ENCODE measurements at regions of chr1 and their contacts with region 1.

Region 1: DNA sequence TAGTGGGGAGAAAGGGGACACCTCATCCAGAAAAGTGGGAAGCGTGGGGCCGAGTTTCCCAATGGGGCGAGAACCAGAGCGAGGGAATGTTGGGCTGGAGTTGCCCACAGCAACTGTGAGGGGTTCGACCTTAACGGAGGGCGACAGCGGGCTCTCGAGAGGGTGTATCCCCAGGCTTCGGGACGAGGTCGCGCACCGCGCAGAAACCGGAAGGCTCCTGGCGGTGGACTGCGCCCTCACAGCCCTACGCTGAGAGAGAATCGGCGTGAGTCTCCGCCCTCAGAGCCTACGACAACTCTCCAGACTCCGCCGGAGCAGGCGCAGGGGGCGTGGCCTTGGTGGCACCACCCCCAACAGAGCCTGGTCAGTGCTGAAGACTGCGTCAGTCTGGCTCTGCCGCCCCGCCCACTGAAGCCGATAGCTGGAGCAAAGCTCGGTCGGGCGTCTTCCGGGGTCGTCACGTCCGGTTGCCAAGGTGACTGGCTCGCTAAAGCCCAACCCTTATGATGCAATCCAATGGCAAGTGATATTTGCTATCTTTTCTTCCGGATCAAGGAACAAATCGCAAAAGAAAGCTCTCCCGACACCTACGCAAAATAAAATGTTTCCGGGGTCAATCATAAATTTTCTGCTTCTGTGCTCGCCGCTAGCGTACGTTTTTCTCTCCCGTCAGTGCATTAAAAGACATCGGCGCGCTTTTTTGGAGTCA is at the start of gene LRIF1:
- DNase-seq: peak; percentile 100
- H3K4me3 ChIP-seq: peak within 1 kb of the TSS; percentile 49 to 85 (median 64)
- H3K27ac ChIP-seq: peak within 1 kb of the TSS; percentile 93
- H3K4me1 ChIP-seq: peaks cover 15% of the 10 kb centered on the region
- H3K27me3 ChIP-seq: peaks cover 2 to 4% of the 10 kb centered on the region in 2 experiments
- CTCF ChIP-seq: peak; percentile 45 to 66
- POLR2A ChIP-seq: peak; percentile 85
- total RNA-seq, gene LRIF1: 12.9 and 13.0 TPM in 2 replicates

Region 2: DNA sequence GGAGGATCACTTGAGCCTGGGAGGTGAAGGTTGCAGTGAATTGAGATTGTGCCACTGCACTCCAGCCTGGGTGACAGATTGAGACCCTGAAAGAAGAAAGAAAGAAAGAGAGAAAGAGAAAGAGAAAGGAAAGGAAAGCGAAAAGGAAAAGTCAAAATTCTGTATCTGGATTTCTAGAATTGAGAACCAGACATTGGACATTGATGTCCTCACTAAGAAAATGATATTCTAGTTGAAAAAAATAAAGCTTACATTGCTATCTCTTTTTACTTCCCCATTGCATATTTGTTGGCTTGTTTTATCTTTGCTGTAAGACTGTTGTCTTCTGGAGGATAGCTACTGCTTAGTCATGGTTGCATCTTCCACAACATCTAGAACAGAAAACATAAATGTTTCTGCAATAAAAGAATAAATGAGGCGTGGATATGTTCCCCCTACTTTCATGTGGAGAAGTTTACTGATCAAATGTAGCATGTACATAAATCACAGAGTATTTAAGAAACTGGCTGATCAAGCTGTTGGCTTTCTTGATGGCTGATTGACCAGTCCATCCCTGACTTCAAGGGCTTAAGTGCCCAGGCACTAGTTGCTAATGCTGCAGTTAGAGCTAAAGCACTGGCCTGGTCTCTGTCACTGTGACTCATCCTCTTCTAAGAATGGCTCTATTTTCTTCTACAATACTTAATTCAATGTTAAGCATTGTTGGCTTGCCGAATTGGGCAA is 73.2 kb before region 1 on chr1:
- CTCF ChIA-PET with region 1: no interaction called
- POLR2A ChIA-PET with region 1: no interaction called
- dilution Hi-C with region 1: no loop called
- intact Hi-C with region 1: no loop called
- DNase-seq: no peak
- H3K4me3 ChIP-seq: no peak overlapping the region
- H3K27ac ChIP-seq: no peak overlapping the region
- H3K4me1 ChIP-seq: no peaks in the 10 kb centered on the region
- H3K27me3 ChIP-seq: no peaks in the 10 kb centered on the region
- CTCF ChIP-seq: no peak
- POLR2A ChIP-seq: no peak

Region 3: GRCh38 chr1:111139956-111140679 is 176.3 kb after region 1 on chr1 and contains the starts of genes CEPT1 and DRAM2:
- CTCF ChIA-PET with region 1: no interaction called
- POLR2A ChIA-PET with region 1: no interaction called
- dilution Hi-C with region 1: no loop called
- intact Hi-C with region 1: loop called (anchors 5 kb)
- DNase-seq: peak; percentile 95
- H3K4me3 ChIP-seq: peak within 1 kb of the TSS; percentile 70 to 93 (median 88)
- H3K27ac ChIP-seq: peak within 1 kb of the TSS; percentile 83
- H3K4me1 ChIP-seq: peaks cover 18% of the 10 kb centered on the region
- H3K27me3 ChIP-seq: no peaks in the 10 kb centered on the region
- CTCF ChIP-seq: no peak
- POLR2A ChIP-seq: peak; percentile 89
- total RNA-seq, gene CEPT1: 27.9 and 29.1 TPM in 2 replicates
- total RNA-seq, gene DRAM2: 21.7 and 24.5 TPM in 2 replicates

Region 4: DNA sequence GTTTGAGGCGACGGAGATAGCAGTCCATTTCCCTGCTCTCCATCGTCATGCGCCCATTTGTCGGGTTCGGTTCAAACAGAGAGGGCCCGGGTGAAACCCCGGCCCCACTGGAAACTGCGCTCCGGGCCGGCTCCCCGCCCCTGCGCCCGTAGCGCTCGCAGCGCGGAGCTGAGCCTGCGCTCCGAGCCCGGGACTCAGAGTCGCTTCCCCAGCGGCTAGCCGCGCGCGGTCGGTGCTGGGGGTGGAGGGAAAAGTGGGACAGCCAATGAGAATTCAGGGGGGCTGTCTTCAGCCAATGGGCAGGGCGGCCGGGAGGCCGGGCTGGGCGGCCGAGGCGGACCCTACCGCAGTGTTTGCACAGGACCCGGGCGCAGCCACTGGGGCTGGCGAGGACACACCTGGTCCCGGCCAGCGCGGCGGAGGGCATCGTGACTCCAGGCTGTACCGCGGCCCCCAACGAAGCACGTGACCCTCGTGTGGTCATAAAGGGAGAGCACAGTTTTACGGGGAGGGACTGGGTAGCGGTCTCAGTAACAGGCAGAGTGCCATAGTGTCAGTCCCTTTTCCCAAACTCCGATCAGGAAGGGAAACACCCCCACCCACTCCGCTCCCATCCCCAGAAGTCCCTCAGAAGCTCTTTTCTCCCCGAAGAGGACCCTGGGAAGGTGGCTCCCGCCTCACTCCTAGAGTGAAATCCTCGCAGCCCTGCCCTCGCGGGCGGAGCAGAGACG is 775.5 kb after region 1 on chr1 and contains the start of gene INKA2:
- CTCF ChIA-PET with region 1: no interaction called
- POLR2A ChIA-PET with region 1: no interaction called
- dilution Hi-C with region 1: no loop called
- intact Hi-C with region 1: loop called (anchors 10 kb)
- DNase-seq: peak; percentile 89
- H3K4me3 ChIP-seq: peak within 1 kb of the TSS; percentile 50 to 68 (median 61)
- H3K27ac ChIP-seq: peak within 1 kb of the TSS; percentile 47
- H3K4me1 ChIP-seq: peaks cover 29% of the 10 kb centered on the region
- H3K27me3 ChIP-seq: peaks cover 4 to 6% of the 10 kb centered on the region in 2 experiments
- CTCF ChIP-seq: no peak
- POLR2A ChIP-seq: no peak
- total RNA-seq, gene INKA2: 5.3 and 7.8 TPM in 2 replicates

Measured in endothelial cell of umbilical vein (primary cell).